ENCODE measurements at regions of chr2 and their contacts with region 1.

Region 1: DNA sequence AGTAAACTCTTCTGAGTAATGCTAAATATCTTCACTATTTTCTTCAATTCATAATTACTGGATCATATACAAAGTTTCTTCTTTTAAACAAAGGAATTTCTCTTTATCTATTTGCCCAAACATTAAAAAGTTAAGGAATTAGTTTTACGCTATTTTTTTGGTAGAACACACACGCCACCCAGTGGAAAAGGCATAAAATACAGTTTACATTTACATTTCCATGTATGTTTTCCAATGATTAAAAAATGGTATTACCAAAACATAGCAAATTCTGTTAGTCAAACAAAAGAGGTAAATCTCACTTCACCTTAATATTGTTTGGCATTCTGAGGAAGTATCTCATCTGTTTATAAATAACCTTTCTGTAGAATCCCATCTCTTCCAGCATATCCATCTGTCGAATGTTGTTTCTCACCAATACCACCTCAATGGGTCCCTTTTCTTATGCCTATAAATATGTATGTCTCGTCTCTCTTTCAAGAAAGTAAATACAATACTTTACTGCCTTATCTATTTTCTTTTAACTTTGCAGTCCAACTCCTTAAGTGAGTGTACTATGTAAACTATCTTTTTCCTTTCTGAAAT is 7.2 kb downstream of the BOLL start:
- DNase-seq: peak; percentile 65
- H3K4me3 Mint-ChIP-seq: no peak overlapping the region
- H3K27ac Mint-ChIP-seq: no peak overlapping the region
- H3K4me1 Mint-ChIP-seq: peaks cover 6% of the 10 kb centered on the region
- H3K27me3 Mint-ChIP-seq: peaks cover 11% of the 10 kb centered on the region
- CTCF ChIP-seq: peak; percentile 64

Region 2: GRCh38 chr2:197383823-197384222 is 394.1 kb before region 1 on chr2:
- CTCF ChIA-PET with region 1: no interaction called
- POLR2A ChIA-PET with region 1: no interaction called
- intact Hi-C with region 1: loop called (anchors 5 kb)
- DNase-seq: no peak
- H3K4me3 Mint-ChIP-seq: no peak overlapping the region
- H3K27ac Mint-ChIP-seq: no peak overlapping the region
- H3K4me1 Mint-ChIP-seq: peaks cover 11% of the 10 kb centered on the region
- H3K27me3 Mint-ChIP-seq: peaks cover 12% of the 10 kb centered on the region
- CTCF ChIP-seq: no peak

Measured in MCF 10A (cell line).